K562 (cell line): ENCODE measurements at regions of chr11 and their contacts with region 1.

Region 1: GRCh38 chr11:32960553-32961164 is 55.0 kb upstream of the DEPDC7 start:
- DNase-seq: peak in 3 of 4 experiments; percentile 6 to 55 (median 11)
- ATAC-seq: peak; percentile 67
- H3K4me3 ChIP-seq: no peak overlapping the region
- H3K27ac ChIP-seq: no peak overlapping the region
- H3K4me1 ChIP-seq: no peaks in the 10 kb centered on the region
- H3K27me3 ChIP-seq: no peaks in the 10 kb centered on the region
- CTCF ChIP-seq: peak in 2 of 3 experiments; percentile 42 to 79; a peak in 4 of 6 replicates
- EP300 ChIP-seq: no peak
- POLR2A ChIP-seq: no peak
- RAD21 ChIP-seq: peak; percentile 76 to 84

Region 2: DNA sequence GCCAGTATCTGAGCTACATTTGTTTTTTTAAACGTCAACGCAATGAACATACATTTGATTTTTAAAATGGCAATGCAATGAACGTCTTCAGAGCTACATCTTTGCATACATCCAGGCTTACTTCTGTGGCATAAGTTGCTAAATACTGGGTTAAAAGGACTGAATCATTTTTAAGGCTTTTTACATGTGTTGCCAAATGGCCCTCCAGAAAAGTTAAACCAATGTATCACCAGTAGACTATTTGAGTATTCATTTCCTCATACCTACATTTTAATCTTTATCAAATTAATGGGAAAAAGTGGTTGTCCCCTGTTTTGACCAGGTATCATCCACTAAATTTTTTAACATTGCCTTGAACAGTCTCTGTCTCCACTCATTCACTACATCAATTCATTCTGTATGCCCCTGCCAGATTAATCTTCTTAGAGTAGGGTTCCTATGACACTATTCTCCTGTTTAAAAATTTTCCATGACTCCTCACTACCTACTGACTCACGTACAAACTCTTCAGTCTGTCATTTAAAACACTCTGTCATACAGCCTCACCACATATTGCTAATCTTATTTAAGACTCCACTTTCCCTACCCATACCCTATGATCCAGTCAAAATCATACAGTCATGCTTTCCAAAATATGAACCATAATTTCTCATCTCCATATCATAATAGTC is 143.3 kb before region 1 on chr11:
- CTCF ChIA-PET with region 1: no interaction called
- POLR2A ChIA-PET with region 1: no interaction called
- in situ Hi-C with region 1: no loop called
- intact Hi-C with region 1: loop called (anchors 10 kb)
- DNase-seq: no peak
- ATAC-seq: no peak
- H3K4me3 ChIP-seq: no peak overlapping the region
- H3K27ac ChIP-seq: no peak overlapping the region
- H3K4me1 ChIP-seq: no peaks in the 10 kb centered on the region
- H3K27me3 ChIP-seq: peaks cover 0 to 11% of the 10 kb centered on the region in 2 experiments; a peak in 2 of 5 replicates
- CTCF ChIP-seq: no peak
- EP300 ChIP-seq: no peak
- POLR2A ChIP-seq: no peak
- RAD21 ChIP-seq: no peak

Region 3: GRCh38 chr11:33065445-33066178 is 105.0 kb after region 1 on chr11:
- CTCF ChIA-PET with region 1: interaction called, 43 read pairs
- POLR2A ChIA-PET with region 1: no interaction called
- in situ Hi-C with region 1: loop called (anchors 5 kb)
- intact Hi-C with region 1: loop called (anchors 1 kb)
- DNase-seq: peak; percentile 64 to 77 (median 69)
- ATAC-seq: peak; percentile 98
- H3K4me3 ChIP-seq: no peak overlapping the region
- H3K27ac ChIP-seq: no peak overlapping the region
- H3K4me1 ChIP-seq: no peaks in the 10 kb centered on the region; a peak in 1 of 5 replicates
- H3K27me3 ChIP-seq: no peaks in the 10 kb centered on the region
- CTCF ChIP-seq: peak; percentile 90 to 93 (median 92)
- EP300 ChIP-seq: no peak
- POLR2A ChIP-seq: no peak
- RAD21 ChIP-seq: peak; percentile 82 to 96

Region 4: DNA sequence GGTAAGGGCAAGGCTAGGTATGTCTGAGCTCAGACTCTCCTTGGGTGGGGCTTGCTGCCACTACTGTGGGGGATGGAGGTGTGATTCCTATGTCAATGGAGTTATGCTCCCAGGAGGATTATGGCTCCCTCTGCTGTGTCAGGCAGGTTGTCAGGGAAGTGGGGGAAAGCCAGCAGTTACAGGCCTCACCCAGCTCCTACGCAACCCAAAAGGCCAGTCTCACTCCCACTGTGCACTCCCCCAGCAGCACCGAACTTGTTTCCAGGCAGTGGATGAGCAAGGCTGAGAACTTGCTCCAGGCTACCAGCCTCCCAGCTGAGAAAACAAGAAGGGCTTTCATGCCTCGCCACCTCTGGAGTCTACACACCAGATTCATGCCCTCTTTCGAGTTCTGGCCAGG is 721.8 kb after region 1 on chr11:
- CTCF ChIA-PET with region 1: interaction called, 11 read pairs
- POLR2A ChIA-PET with region 1: no interaction called
- in situ Hi-C with region 1: no loop called
- intact Hi-C with region 1: loop called (anchors 5 kb)
- DNase-seq: no peak
- ATAC-seq: peak; percentile 47
- H3K4me3 ChIP-seq: no peak overlapping the region
- H3K27ac ChIP-seq: no peak overlapping the region
- H3K4me1 ChIP-seq: no peaks in the 10 kb centered on the region
- H3K27me3 ChIP-seq: peaks cover 5 to 14% of the 10 kb centered on the region in 2 experiments; a peak in 3 of 5 replicates
- CTCF ChIP-seq: peak in 2 of 3 experiments; percentile 10 to 26; a peak in 2 of 6 replicates
- EP300 ChIP-seq: no peak
- POLR2A ChIP-seq: no peak
- RAD21 ChIP-seq: peak in 1 of 2 experiments; percentile 39; a peak in 2 of 4 replicates

Region 5: GRCh38 chr11:33829433-33830141 is 868.9 kb after region 1 on chr11:
- CTCF ChIA-PET with region 1: interaction called, 13 read pairs
- POLR2A ChIA-PET with region 1: no interaction called
- in situ Hi-C with region 1: no loop called
- intact Hi-C with region 1: no loop called
- DNase-seq: peak; percentile 51 to 77 (median 64)
- ATAC-seq: peak; percentile 94
- H3K4me3 ChIP-seq: no peak overlapping the region
- H3K27ac ChIP-seq: no peak overlapping the region
- H3K4me1 ChIP-seq: peaks cover 0 to 9% of the 10 kb centered on the region in 2 experiments; a peak in 2 of 5 replicates
- H3K27me3 ChIP-seq: peaks cover 32 to 49% of the 10 kb centered on the region in 2 experiments
- CTCF ChIP-seq: peak; percentile 81 to 94 (median 86)
- EP300 ChIP-seq: no peak
- POLR2A ChIP-seq: no peak
- RAD21 ChIP-seq: peak; percentile 85 to 90